CD14-positive monocyte (primary cell): ENCODE measurements at regions of chr20 and their contacts with region 1.

Region 1: GRCh38 chr20:54649511-54649962 is 174.1 kb downstream of the DOK5 start:
- DNase-seq: peak; percentile 16 to 39 (median 23)
- H3K4me3 ChIP-seq: no peak overlapping the region
- H3K4me3 Mint-ChIP-seq: no peak overlapping the region
- H3K27ac ChIP-seq: no peak overlapping the region
- H3K27ac Mint-ChIP-seq: no peak overlapping the region
- H3K4me1 ChIP-seq: no peaks in the 10 kb centered on the region
- H3K4me1 Mint-ChIP-seq: no peaks in the 10 kb centered on the region
- H3K27me3 ChIP-seq: no peaks in the 10 kb centered on the region
- H3K27me3 Mint-ChIP-seq: peaks cover 3 to 13% (median 5%) of the 10 kb centered on the region in 3 donors
- CTCF ChIP-seq: peak; percentile 85

Region 2: GRCh38 chr20:54097236-54097529 is 552.4 kb before region 1 on chr20:
- intact Hi-C with region 1: loop called (anchors 5 kb)
- DNase-seq: no peak
- H3K4me3 ChIP-seq: no peak overlapping the region
- H3K4me3 Mint-ChIP-seq: no peak overlapping the region
- H3K27ac ChIP-seq: no peak overlapping the region
- H3K27ac Mint-ChIP-seq: no peak overlapping the region
- H3K4me1 ChIP-seq: peaks cover 3 to 8% of the 10 kb centered on the region in 2 donors
- H3K4me1 Mint-ChIP-seq: peaks cover 16% of the 10 kb centered on the region
- H3K27me3 ChIP-seq: no peaks in the 10 kb centered on the region
- H3K27me3 Mint-ChIP-seq: peaks cover 0 to 2% (median 0%) of the 10 kb centered on the region in 3 donors
- CTCF ChIP-seq: no peak

Region 3: GRCh38 chr20:54219751-54220426 is 429.6 kb before region 1 on chr20:
- intact Hi-C with region 1: loop called in 1 of 2 experiments (anchors 10 kb)
- DNase-seq: no peak
- H3K4me3 ChIP-seq: no peak overlapping the region
- H3K4me3 Mint-ChIP-seq: no peak overlapping the region
- H3K27ac ChIP-seq: no peak overlapping the region
- H3K27ac Mint-ChIP-seq: no peak overlapping the region
- H3K4me1 ChIP-seq: peaks cover 11% of the 10 kb centered on the region in 2 donors
- H3K4me1 Mint-ChIP-seq: peaks cover 17% of the 10 kb centered on the region
- H3K27me3 ChIP-seq: no peaks in the 10 kb centered on the region
- H3K27me3 Mint-ChIP-seq: peaks cover 0 to 3% (median 2%) of the 10 kb centered on the region in 3 donors
- CTCF ChIP-seq: no peak